ENCODE measurements at regions of chr3 and their contacts with region 1.

Region 1: GRCh38 chr3:129627429-129628168 is 21.1 kb upstream of the PLXND1 start:
- DNase-seq: peak; percentile 61
- ATAC-seq: peak; percentile 47
- H3K4me3 ChIP-seq: peak overlapping the region; percentile 87 to 97
- H3K27ac ChIP-seq: peak overlapping the region; percentile 97
- H3K4me1 ChIP-seq: peaks cover 15 to 24% of the 10 kb centered on the region in 2 experiments
- H3K27me3 ChIP-seq: no peaks in the 10 kb centered on the region
- CTCF ChIP-seq: peak in 2 of 3 experiments; percentile 90 to 94; a peak in 4 of 6 replicates
- POLR2A ChIP-seq: no peak
- RAD21 ChIP-seq: no peak

Region 2: DNA sequence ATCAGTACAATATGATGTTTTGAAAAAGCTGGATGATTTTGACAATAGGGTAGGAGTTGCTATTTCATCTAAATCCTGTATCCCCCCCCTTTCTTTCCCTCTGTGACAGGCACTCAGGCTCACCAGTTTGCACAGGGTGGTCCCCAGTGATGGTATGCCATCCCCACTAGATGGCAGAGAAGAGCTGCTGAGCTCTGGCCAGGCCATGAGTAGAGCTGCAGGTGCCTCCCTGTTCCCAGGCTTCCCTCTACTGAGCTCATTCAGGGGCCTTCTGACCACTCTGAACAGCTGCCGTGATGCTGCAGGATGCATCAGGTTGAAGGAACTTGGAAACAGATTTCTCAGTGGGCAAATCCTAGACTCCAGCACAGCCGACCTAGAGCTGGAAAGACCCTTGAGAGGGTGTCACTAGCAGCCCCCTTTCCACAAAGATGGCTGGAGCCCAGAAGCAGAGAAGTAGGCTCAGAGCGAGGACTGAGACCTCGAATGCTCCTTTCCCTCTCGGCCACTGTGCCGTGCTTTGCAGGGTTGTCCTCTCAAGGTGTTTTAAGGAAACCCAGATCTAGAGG is 244.2 kb before region 1 on chr3:
- CTCF ChIA-PET with region 1: interaction called, 13 read pairs
- POLR2A ChIA-PET with region 1: no interaction called
- RAD21 ChIA-PET with region 1: no interaction called
- intact Hi-C with region 1: loop called (anchors 5 kb)
- DNase-seq: peak; percentile 19
- ATAC-seq: peak; percentile 99
- H3K4me3 ChIP-seq: no peak overlapping the region
- H3K27ac ChIP-seq: no peak overlapping the region
- H3K4me1 ChIP-seq: peaks cover 7 to 12% of the 10 kb centered on the region in 2 experiments
- H3K27me3 ChIP-seq: no peaks in the 10 kb centered on the region
- CTCF ChIP-seq: peak; percentile 59 to 92 (median 85); a peak in 5 of 6 replicates
- POLR2A ChIP-seq: no peak
- RAD21 ChIP-seq: peak; percentile 78

Region 3: GRCh38 chr3:129824926-129825541 is 197.4 kb after region 1 on chr3:
- CTCF ChIA-PET with region 1: interaction called, 16 read pairs
- POLR2A ChIA-PET with region 1: interaction called, 4 read pairs
- RAD21 ChIA-PET with region 1: interaction called in 1 of 2 experiments, 3 read pairs
- intact Hi-C with region 1: loop called (anchors 1 kb)
- DNase-seq: peak; percentile 58
- ATAC-seq: peak; percentile 82
- H3K4me3 ChIP-seq: no peak overlapping the region
- H3K27ac ChIP-seq: no peak overlapping the region
- H3K4me1 ChIP-seq: peaks cover 0 to 11% of the 10 kb centered on the region in 2 experiments; a peak in 3 of 4 replicates
- H3K27me3 ChIP-seq: no peaks in the 10 kb centered on the region
- CTCF ChIP-seq: peak; percentile 59 to 94 (median 80)
- POLR2A ChIP-seq: no peak
- RAD21 ChIP-seq: peak; percentile 96

Region 4: DNA sequence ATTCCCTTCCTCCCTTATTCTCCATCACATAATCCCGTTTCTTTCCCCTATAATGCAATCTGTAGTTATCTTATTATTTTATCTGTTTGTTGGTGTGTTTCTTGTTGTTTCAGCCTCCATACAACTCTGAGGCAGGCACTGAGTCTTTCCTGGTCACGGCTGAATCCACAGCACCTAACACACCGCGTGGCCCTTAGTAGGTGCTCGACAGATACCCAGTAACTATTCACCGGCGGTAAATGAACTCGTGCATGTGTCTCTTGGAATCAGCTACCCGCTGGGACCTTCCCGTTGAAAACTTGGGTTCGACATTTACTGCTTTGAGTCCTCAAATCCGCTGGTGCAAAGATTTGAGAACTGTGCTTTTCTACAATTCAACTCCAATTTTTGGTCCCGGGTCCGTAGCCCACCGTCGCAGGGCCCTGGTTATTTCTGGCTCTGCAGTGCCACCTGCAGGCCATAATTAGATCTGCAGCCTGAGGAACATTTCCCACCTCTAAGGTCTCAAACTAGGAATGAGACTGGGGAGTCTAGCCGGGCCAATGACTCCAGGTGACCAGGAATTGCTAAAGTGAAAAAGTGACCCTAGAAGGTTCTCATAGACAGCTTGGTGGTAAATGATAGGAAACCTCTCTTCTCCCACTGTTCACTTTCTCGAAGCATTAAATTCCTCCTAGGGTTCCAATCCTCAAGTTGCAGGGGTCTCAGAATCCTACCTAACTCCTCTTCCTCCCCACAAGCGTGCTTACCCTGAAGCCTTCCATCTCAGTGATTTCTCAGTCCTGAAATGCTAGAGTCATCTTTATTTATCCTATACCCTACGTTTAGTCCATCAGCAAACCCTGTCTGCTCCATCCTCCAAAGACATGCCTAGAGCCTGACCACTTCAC is 306.9 kb after region 1 on chr3:
- CTCF ChIA-PET with region 1: interaction called, 13 read pairs
- POLR2A ChIA-PET with region 1: no interaction called
- RAD21 ChIA-PET with region 1: no interaction called
- intact Hi-C with region 1: loop called (anchors 1 kb)
- DNase-seq: peak; percentile 12
- ATAC-seq: peak; percentile 82
- H3K4me3 ChIP-seq: no peak overlapping the region
- H3K27ac ChIP-seq: no peak overlapping the region
- H3K4me1 ChIP-seq: peaks cover 0 to 3% of the 10 kb centered on the region in 2 experiments; a peak in 1 of 4 replicates
- H3K27me3 ChIP-seq: no peaks in the 10 kb centered on the region
- CTCF ChIP-seq: peak; percentile 81 to 98 (median 91)
- POLR2A ChIP-seq: no peak
- RAD21 ChIP-seq: peak; percentile 96

Region 5: GRCh38 chr3:130111185-130111864 is 483.7 kb after region 1 on chr3:
- CTCF ChIA-PET with region 1: no interaction called
- POLR2A ChIA-PET with region 1: no interaction called
- RAD21 ChIA-PET with region 1: no interaction called
- intact Hi-C with region 1: loop called (anchors 5 kb)
- DNase-seq: peak; percentile 93
- ATAC-seq: peak; percentile 99
- H3K4me3 ChIP-seq: peak overlapping the region; percentile 74 to 79
- H3K27ac ChIP-seq: peak overlapping the region; percentile 76
- H3K4me1 ChIP-seq: peaks cover 16 to 25% of the 10 kb centered on the region in 2 experiments
- H3K27me3 ChIP-seq: no peaks in the 10 kb centered on the region
- CTCF ChIP-seq: no peak
- POLR2A ChIP-seq: peak; percentile 30
- RAD21 ChIP-seq: no peak